ENCODE measurements at regions of chr6 and their contacts with region 1.

Region 1: GRCh38 chr6:169691260-169691659 is 10.6 kb downstream of the WDR27 start:
- DNase-seq: no peak
- H3K4me3 ChIP-seq: no peak overlapping the region
- H3K27me3 ChIP-seq: no peaks in the 10 kb centered on the region
- CTCF ChIP-seq: no peak

Region 2: GRCh38 chr6:169545982-169546381 is 145.3 kb before region 1 on chr6:
- CTCF ChIA-PET with region 1: no interaction called
- POLR2A ChIA-PET with region 1: interaction called, 21 read pairs
- DNase-seq: no peak
- H3K4me3 ChIP-seq: no peak overlapping the region
- H3K27me3 ChIP-seq: no peaks in the 10 kb centered on the region
- CTCF ChIP-seq: no peak

Measured in BJ (cell line).